Activated B cell treated with CpG ODN at 0.5 μM for 24 hours (primary cell): ENCODE measurements at regions of chrX and their contacts with region 1.

Region 1: DNA sequence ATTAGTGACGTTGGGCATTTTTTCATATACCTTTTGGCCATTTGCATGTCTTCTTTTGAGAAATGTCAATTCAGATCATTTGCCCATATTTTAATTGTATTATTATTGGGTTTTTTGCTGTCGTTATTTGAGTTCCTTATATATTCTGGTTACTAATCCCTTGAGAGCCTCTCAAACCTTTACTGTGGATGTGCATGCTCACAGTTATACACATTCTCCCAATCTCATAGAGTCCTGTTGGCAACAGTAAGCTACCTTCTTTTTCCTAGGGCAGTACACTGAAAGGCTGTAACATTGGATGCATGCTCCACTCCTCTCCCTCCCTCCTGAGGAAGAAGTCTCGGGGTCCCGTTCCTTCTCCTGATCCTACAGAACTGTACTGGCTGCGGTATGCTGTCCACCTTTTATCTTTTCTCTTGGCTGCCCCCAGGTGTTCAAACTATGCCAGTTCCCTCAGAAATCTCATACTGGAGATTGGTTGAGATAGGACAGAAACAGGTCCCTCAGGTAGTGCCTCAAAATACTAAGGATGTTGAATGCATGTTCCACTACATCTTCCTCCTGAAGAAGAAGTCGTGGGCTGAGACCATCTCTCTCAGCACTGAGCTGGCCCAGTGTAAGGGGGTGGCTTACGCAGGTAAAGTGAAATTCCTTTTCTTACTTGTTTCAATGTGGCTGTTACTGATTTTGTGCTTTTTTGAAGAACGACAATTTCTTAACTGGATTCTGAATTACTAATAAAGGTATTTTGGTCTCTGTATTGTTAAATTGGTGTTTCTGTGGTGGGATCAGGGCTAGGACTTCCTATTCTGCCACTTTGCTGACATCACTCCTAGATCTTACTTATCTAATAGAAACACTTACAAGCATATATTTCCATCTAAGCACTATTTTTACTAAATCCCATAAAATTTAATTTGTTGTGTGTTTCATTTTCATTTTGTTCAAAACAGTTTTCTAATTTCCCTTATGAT is 145.4 kb upstream of the HUWE1 start:
- DNase-seq: peak; percentile 15
- ATAC-seq: peak; percentile 67
- H3K4me3 Mint-ChIP-seq: peak overlapping the region; percentile 19
- H3K27ac Mint-ChIP-seq: no peak overlapping the region
- H3K4me1 Mint-ChIP-seq: peaks cover 2% of the 10 kb centered on the region
- H3K27me3 Mint-ChIP-seq: no peaks in the 10 kb centered on the region
- CTCF ChIP-seq: no peak

Region 2: DNA sequence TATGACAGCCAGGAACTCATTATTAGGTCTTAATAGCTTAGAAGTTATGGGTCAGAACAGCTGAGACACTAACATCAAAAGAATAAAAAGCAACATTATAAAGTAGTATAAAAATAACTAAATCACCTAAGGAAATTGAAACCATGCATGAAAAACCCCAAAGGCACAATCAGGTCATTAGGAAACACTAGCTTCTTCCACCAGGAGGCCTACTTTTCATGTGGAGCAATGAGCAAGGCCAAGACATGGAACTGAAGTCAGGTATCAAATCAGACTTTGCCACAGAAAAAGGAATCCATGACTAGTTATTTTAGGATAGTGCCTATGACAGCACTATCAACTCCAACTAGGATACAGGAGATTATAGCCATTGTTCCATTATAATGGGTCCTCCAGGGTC is 153.3 kb before region 1 on chrX:
- CTCF ChIA-PET with region 1: interaction called, 8 read pairs
- POLR2A ChIA-PET with region 1: interaction called, 11 read pairs
- intact Hi-C with region 1: loop called (anchors 1 kb)
- DNase-seq: no peak
- ATAC-seq: no peak
- H3K4me3 Mint-ChIP-seq: no peak overlapping the region
- H3K27ac Mint-ChIP-seq: no peak overlapping the region
- H3K4me1 Mint-ChIP-seq: peaks cover 26% of the 10 kb centered on the region
- H3K27me3 Mint-ChIP-seq: no peaks in the 10 kb centered on the region
- CTCF ChIP-seq: no peak

Region 3: DNA sequence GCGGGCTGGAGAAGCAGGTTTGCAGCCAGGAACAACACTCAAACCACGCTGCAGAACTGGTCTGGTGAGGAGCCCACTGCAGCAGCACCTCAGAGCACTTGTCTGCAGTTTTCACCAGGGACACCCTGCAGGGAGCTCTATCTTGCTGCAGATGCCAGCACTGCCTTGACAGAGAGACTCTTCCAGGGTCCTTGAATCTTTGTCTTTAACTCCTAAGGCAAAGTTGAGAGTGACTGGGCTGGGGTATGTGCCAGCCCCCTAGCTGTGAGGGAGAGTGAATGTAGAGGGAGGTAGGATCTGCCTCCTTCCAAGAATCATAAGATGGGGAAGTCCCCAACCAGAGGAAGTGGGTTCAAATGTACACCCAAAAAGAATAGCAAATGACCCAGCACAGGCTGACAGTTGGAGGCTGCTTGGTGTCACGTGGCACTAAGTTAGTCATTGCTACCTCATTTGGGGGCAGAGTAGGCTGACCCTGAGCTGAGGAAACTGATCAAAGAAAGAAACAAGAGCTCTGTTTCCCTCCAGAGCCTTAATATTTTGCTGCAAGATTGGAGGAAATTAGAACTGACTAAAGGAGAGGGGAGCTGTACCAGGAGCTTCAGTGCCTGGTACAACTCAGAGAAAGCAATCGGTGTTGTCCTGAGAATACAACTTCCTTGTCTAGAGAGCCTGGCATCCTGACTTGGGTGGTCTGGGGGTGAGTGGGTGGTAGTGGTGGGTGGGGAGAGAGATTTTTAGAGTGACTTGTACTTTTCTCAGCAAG is 117.2 kb before region 1 on chrX:
- CTCF ChIA-PET with region 1: no interaction called
- POLR2A ChIA-PET with region 1: no interaction called
- intact Hi-C with region 1: loop called (anchors 1 kb)
- DNase-seq: peak; percentile 16
- ATAC-seq: peak; percentile 72
- H3K4me3 Mint-ChIP-seq: peak overlapping the region; percentile 79
- H3K27ac Mint-ChIP-seq: peak overlapping the region; percentile 96
- H3K4me1 Mint-ChIP-seq: peaks cover 49% of the 10 kb centered on the region
- H3K27me3 Mint-ChIP-seq: no peaks in the 10 kb centered on the region
- CTCF ChIP-seq: no peak